Left cardiac atrium (tissue), 4 donors: ENCODE measurements at regions of chr16 and their contacts with region 1.

Region 1: GRCh38 chr16:66928702-66929388 is 3.5 kb upstream of the RRAD start:
- DNase-seq: no peak
- ATAC-seq: no peak

Region 2: GRCh38 chr16:66902648-66903543 is 25.9 kb before region 1 on chr16:
- intact Hi-C with region 1: loop called in 1 of 2 experiments (anchors 1 kb)
- DNase-seq: peak; percentile 68
- ATAC-seq: peak; percentile 50 to 54

Region 3: DNA sequence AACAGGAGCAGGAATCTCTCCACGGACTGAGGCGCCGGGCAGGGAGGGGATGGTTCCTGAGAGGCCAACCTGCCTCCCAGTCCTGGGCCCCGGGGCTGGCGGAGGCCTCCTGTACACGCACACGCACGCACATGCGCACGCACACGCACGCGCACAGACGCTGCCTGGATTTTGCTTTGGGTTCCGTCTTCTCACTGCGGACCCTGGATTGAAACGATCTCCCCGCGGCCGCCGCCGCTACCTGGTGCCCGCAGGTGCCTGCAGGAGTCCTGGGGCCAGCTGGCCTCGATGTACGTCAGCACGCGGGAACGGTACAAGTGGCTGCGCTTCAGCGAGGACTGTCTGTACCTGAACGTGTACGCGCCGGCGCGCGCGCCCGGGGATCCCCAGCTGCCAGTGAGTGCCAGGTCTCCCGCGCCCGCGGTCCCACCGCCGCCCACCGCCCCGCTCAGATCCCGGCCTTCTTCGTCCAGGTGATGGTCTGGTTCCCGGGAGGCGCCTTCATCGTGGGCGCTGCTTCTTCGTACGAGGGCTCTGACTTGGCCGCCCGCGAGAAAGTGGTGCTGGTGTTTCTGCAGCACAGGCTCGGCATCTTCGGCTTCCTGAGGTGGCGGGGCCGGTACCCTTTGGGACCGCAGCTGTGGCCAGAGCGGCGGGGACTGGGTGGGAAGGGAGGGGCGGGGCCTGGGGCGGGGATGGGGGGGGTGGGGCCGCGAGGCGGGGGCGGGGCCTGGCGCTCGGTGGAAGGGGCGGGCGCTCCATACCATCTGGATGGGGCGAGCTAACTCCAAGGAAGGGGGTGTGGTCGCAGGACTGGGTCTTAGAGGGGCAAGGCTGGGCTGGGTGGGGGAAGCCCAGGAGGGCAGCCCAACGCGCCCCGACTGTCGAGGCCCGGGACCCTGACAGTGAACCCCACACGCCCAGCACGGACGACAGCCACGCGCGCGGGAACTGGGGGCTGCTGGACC is 71.8 kb after region 1 on chr16:
- intact Hi-C with region 1: no loop called
- DNase-seq: peak; percentile 58
- ATAC-seq: peak; percentile 62 to 76